GM18951 (cell line): ENCODE measurements at regions of chr3 and their contacts with region 1.

Region 1: GRCh38 chr3:146160964-146161662 is at the start of gene PLOD2:
- POLR2A ChIP-seq: peak; percentile 42

Region 2: GRCh38 chr3:145776782-145777408 is 384.2 kb before region 1 on chr3:
- in situ Hi-C with region 1: loop called (anchors 25 kb)
- POLR2A ChIP-seq: no peak

Region 3: DNA sequence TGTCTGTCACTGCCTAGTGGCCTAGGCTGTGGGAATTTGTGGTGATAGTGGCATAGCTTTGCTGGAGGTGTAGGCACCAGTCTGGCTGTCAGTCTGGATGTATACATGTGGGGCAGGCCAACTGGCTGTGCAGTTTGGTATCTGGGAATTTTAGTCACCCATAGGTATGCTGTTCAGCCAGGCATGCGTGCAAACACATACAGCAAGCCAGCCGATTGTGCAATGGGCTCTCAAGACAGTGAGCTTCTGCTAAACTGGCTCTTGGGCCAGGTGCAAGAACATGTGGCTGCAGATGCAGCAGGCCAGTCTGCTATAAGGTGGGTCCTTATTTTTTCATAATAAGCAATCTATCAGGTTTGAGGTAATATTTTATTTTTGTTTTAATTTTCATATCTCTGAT is 531.1 kb after region 1 on chr3:
- in situ Hi-C with region 1: no loop called
- POLR2A ChIP-seq: no peak